Left cardiac atrium (tissue), 4 donors: ENCODE measurements at regions of chr6 and their contacts with region 1.

Region 1: DNA sequence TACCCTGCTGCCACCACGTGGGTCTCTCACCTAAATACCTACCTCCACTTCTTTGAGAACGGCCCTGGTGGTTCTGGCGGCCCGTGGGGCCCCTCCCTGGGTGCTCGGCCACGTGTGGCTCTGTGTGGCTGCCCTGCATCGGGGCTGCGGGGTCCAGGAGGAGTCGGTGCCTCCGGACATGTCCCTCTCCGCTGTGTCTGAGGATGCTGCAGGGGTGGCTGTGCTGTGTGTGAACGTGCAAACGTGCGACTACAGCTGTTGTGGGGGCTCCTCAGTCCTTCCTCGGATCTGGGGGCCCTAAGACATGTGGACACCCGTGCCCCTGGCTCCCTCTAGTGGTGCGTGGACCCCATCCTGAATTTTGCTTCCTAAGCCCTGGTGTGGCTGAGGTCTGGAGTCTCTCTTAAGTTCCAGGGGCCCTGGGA is 691.8 kb downstream of the QKI start:
- DNase-seq: peak; percentile 69
- ATAC-seq: peak; percentile 42 to 45

Region 2: DNA sequence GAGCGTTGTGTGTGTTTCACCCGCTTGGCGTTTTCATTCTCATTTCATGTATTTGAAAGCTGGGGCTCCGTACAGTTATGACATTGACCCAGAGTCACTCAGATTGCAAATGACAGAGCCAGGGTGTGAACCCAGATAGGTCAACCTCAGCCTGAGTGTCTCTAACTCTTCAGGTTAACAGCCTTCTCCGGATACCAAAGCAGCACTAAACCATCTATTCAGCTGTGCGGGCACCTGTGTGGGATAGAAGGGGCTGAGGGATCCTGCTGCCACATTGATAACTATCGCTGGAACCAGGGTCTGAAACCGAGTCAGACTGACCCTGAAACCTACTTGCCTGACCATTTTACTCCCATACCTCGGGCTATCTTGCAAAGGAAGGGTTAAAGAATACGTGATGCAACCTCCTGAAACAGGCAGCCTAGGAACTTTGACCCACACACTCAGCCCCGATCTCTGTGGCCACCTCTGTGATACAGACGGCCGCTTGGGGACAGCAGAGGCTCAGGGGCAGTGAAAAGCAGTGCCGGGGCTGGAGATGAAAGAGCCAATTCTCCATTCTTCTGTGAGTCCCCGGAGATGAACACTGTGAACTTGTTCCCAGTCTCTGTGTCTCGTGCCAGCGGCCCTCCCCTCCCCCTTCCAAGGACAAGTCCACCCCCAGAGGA is 925.3 kb before region 1 on chr6:
- intact Hi-C with region 1: loop called in 1 of 2 experiments (anchors 5 kb)
- DNase-seq: peak; percentile 79
- ATAC-seq: peak; percentile 96 to 98

Region 3: GRCh38 chr6:163419413-163420288 is 686.7 kb before region 1 on chr6:
- intact Hi-C with region 1: loop called in 1 of 2 experiments (anchors 5 kb)
- DNase-seq: no peak
- ATAC-seq: no peak

Region 4: DNA sequence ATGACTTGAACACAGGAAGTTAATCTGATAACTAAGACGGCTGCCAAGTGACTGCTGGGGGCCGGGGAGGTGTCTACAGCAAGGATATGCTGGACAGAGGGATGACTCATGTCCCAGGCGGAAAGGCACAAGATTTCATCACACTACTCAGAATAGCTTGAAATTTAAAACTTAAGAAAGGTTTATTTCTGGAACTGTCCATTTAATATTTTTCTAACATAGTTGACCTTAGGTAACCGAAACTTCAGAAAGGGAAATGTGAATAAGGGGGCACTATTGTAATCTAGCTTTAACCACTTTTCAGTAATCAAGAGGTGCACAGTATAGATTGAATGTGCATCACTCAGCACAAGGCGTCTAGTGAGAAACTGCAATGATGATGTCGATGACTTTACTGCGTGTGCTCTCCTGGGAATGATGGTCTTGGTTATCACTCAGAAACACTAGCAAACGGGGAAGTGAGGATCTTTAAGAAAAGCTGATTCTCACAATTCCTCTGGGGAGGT is 520.4 kb before region 1 on chr6:
- intact Hi-C with region 1: loop called in 1 of 2 experiments (anchors 10 kb)
- DNase-seq: peak; percentile 76
- ATAC-seq: peak; percentile 67 to 89

Region 5: DNA sequence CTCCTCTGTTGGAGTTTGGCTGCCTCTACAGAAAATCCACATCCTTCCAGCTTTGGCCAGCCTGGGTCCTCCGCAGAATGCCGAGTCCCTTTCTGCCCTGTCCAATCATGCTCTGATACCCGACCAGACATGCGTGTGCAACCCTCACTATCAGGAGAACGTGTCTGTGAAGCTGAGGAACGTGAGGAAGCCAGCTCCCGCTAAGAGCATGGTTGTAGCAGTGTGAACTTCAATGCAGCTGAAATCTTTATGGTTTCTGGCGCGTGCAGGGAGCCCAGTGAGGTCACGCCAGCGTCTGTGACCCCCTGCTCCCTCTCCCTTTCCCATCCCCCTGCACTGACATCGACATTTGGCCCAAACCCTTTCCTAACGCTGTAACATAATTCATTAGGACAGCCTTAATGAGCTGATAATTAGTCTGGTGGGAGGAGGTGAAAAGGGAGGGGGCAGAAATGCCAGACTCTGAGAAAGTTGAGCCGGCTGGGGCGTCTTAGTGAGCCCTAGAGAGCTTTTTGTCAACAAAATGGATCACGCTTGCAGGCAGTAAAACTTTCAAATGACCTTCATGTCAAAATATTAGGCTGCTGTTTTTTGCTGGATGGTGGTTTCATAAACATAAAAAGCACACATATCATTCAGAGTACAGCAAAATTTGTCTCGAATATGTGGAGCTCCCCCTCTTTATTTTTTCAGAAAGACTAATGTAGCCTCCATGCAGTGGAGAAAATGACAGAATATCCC is 268.5 kb before region 1 on chr6:
- intact Hi-C with region 1: loop called in 1 of 2 experiments (anchors 5 kb)
- DNase-seq: peak; percentile 23
- ATAC-seq: peak; percentile 75 to 85

Region 6: DNA sequence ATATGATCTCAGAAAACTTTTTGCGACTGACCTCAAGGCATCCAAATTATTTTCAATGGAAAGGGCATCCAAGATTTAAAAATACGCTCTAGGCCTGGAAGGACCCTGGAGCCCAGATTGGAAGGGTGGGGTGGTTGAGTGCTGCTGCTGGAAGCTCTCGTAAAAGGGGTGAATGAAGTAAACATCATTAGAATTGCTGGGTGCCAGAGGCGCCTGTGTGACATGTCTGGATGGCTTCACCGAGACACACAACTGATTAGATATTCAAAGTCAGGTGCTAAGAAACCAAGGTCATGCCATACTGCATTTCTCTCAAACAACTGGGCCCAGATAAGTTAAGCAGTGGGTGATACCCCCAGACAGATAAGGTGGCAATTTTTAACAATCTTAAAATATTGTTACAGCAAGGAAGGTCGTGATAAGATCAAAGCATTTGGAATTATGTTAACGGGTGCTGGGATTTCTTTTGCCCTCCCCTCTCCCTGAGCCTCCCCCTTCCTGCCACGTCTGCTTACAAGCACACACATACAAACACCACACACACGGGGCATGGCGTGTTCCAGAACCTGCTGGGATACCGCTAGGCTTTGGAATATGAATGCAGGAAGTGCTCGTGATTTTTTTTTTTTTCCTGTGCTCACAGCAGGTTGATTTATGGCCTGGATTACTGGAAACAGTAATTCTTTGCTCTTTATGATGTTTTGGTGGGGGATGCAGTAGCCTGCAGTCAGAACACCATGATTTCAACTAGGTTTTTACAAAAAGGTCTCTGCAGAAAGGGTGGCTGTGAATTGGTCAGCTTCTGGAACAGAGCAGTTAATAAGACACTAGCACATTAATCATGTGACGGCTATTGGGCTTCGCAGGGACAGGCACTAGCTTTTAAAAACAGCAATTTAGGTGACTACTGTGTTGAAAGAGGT is 140.7 kb before region 1 on chr6:
- intact Hi-C with region 1: loop called (anchors 2 to 10 kb)
- DNase-seq: peak; percentile 45
- ATAC-seq: peak; percentile 38 to 41

Region 7: DNA sequence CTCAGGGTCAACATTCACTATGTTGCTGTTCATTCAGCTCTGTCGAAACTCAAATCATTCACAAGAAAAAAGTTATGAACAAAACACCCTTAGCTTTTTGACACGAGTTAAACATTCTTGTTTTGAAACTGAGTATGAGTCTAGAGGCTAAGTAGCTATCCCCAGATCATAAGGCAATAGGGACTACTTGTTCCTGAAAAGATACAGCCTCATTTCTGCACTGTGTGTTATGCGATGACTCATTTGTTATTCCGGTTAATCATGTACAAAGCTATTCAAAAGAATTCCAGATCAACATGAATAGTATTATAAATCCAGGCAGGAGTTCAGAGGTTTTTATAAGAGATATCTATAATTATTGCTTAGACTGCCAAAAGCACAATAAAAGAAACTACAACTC is 216.2 kb after region 1 on chr6:
- intact Hi-C with region 1: no loop called
- DNase-seq: no peak
- ATAC-seq: peak; percentile 53 to 94

Region 8: DNA sequence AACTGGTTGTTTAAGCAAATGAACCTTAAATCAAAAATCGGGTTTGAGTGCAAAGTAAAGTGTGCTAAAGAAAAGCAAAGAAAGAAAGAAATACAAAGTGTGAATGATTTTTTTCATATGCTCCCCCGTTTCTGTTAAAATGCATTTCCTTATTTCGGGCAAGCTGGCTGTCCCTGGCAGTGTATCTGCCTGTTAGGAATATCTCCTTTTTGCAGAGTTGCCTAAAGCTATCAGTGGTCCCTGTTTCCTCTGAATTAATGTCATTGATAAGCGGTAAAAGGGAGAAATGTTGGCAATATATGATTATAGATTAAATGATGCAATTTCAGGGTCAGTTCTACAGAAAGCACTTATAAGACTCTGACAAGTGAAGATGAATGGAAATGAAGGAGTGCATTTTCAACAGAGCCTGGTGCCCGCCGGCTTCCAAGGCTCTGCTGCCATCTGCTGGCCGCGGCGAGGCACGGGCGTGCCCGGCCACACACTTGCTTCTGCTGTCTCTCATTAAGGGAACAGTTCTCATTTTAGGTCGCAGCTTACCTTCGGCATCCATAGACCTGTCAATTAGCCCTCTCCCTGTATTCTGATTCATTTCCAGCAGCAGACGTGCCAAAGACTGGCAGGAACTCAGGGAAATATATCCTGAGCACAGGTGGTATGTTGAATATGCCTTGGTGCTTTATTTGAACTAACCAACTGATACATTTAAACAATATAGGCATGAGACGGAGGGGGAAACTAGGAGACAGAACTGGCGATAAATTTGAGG is 821.1 kb after region 1 on chr6:
- intact Hi-C with region 1: loop called in 1 of 2 experiments (anchors 5 kb)
- DNase-seq: peak; percentile 58
- ATAC-seq: peak; percentile 94 to 95